K562 (cell line): ENCODE measurements at regions of chrX and their contacts with region 1.

Region 1: GRCh38 chrX:37825209-37825842 is 22.0 kb downstream of the DYNLT3 start:
- DNase-seq: peak; percentile 19 to 51 (median 24)
- ATAC-seq: peak; percentile 77
- H3K4me3 ChIP-seq: no peak overlapping the region
- H3K27ac ChIP-seq: no peak overlapping the region
- H3K4me1 ChIP-seq: no peaks in the 10 kb centered on the region; a peak in 1 of 5 replicates
- H3K27me3 ChIP-seq: no peaks in the 10 kb centered on the region
- CTCF ChIP-seq: peak; percentile 69 to 87 (median 76); a peak in 5 of 6 replicates
- EP300 ChIP-seq: no peak
- POLR2A ChIP-seq: no peak
- RAD21 ChIP-seq: peak; percentile 93 to 95

Region 2: GRCh38 chrX:37509349-37509748 is 316.0 kb before region 1 on chrX:
- CTCF ChIA-PET with region 1: no interaction called
- POLR2A ChIA-PET with region 1: no interaction called
- in situ Hi-C with region 1: no loop called
- intact Hi-C with region 1: loop called (anchors 1 kb)
- DNase-seq: peak in 1 of 4 experiments; percentile 8
- ATAC-seq: peak; percentile 77
- H3K4me3 ChIP-seq: no peak overlapping the region
- H3K27ac ChIP-seq: no peak overlapping the region
- H3K4me1 ChIP-seq: peaks cover 0 to 3% of the 10 kb centered on the region in 2 experiments; a peak in 1 of 5 replicates
- H3K27me3 ChIP-seq: no peaks in the 10 kb centered on the region
- CTCF ChIP-seq: peak; percentile 15 to 42 (median 40); a peak in 3 of 6 replicates
- EP300 ChIP-seq: no peak
- POLR2A ChIP-seq: no peak
- RAD21 ChIP-seq: peak; percentile 33 to 60

Region 3: DNA sequence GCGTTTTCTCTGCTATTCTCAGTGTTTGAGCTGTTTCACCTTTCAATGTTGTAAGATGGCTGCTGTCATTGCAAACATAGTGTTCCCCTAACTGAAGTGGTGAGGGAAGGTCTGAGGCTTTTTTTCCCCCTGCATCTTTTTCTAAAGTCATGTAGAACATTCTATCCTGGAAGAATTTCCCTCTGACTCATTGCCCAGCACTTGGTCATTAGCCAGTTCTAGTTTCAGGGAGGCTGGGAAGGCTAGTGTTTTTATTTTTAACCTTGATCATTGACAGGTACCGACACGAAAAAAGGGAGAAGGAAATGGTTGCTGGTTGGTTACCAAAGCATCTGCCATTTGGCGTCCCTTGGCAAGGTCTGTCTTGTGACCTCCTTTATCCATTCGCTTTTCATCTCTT is 247.3 kb before region 1 on chrX:
- CTCF ChIA-PET with region 1: no interaction called
- POLR2A ChIA-PET with region 1: no interaction called
- in situ Hi-C with region 1: loop called (anchors 10 kb)
- intact Hi-C with region 1: loop called (anchors 2 kb)
- DNase-seq: no peak
- ATAC-seq: no peak
- H3K4me3 ChIP-seq: no peak overlapping the region
- H3K27ac ChIP-seq: no peak overlapping the region
- H3K4me1 ChIP-seq: no peaks in the 10 kb centered on the region; a peak in 2 of 5 replicates
- H3K27me3 ChIP-seq: no peaks in the 10 kb centered on the region
- CTCF ChIP-seq: no peak
- EP300 ChIP-seq: no peak
- POLR2A ChIP-seq: no peak
- RAD21 ChIP-seq: no peak

Region 4: GRCh38 chrX:37627602-37628001 is 197.7 kb before region 1 on chrX:
- CTCF ChIA-PET with region 1: no interaction called
- POLR2A ChIA-PET with region 1: interaction called, 3 read pairs
- in situ Hi-C with region 1: no loop called
- intact Hi-C with region 1: loop called (anchors 5 kb)
- DNase-seq: no peak
- ATAC-seq: no peak
- H3K4me3 ChIP-seq: no peak overlapping the region
- H3K27ac ChIP-seq: no peak overlapping the region
- H3K4me1 ChIP-seq: no peaks in the 10 kb centered on the region
- H3K27me3 ChIP-seq: no peaks in the 10 kb centered on the region
- CTCF ChIP-seq: no peak
- EP300 ChIP-seq: no peak
- POLR2A ChIP-seq: no peak
- RAD21 ChIP-seq: no peak

Region 5: GRCh38 chrX:37745354-37745753 is 80.0 kb before region 1 on chrX:
- CTCF ChIA-PET with region 1: interaction called, 21 read pairs
- POLR2A ChIA-PET with region 1: no interaction called
- in situ Hi-C with region 1: loop called (anchors 5 kb)
- intact Hi-C with region 1: loop called (anchors 1 kb)
- DNase-seq: peak; percentile 54 to 72 (median 68)
- ATAC-seq: peak; percentile 95
- H3K4me3 ChIP-seq: no peak overlapping the region
- H3K27ac ChIP-seq: no peak overlapping the region
- H3K4me1 ChIP-seq: no peaks in the 10 kb centered on the region
- H3K27me3 ChIP-seq: no peaks in the 10 kb centered on the region
- CTCF ChIP-seq: peak; percentile 76 to 80 (median 80)
- EP300 ChIP-seq: no peak
- POLR2A ChIP-seq: no peak
- RAD21 ChIP-seq: peak; percentile 85 to 89

Region 6: GRCh38 chrX:37926700-37927099 is 101.4 kb after region 1 on chrX:
- CTCF ChIA-PET with region 1: no interaction called
- POLR2A ChIA-PET with region 1: no interaction called
- in situ Hi-C with region 1: no loop called
- intact Hi-C with region 1: no loop called
- DNase-seq: peak; percentile 12 to 26 (median 16)
- ATAC-seq: peak; percentile 59; the same call in 1 of the 3 replicates
- H3K4me3 ChIP-seq: no peak overlapping the region
- H3K27ac ChIP-seq: no peak overlapping the region
- H3K4me1 ChIP-seq: no peaks in the 10 kb centered on the region
- H3K27me3 ChIP-seq: no peaks in the 10 kb centered on the region
- CTCF ChIP-seq: peak in 2 of 3 experiments; percentile 13 to 54; a peak in 2 of 6 replicates
- EP300 ChIP-seq: no peak
- POLR2A ChIP-seq: no peak
- RAD21 ChIP-seq: peak; percentile 45 to 67

Region 7: DNA sequence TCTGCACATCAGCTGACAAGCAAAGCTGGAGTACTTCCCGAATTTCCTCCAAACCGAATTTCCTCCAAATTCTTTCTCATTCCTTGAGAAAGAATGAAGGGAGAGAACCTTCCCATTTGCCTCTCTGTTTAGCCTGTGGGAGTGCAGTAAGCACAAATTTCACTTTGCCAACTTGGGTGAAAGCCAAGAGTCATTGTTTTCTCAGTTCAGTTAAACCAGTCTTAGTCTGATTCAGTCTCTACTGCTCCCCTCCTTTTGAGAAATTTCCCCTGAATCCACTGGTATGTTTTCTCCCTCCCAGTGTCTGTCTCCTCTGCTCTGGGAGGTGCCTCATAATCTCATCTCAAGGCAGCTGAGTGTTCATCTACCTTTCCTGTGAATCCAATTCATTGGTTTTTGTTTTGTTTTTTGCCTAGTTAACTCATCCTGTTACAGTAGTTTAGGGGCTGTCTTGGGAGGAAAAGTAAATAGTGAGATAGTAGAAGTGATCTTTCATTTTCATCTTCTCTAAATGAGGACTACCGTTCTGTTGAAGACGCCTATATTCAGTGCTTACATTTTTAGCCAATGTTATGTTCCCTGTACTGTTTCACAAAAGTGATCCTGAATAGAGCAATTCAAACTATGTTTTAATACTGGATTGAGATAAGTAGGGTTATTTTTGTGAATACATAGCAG is 230.0 kb after region 1 on chrX:
- CTCF ChIA-PET with region 1: no interaction called
- POLR2A ChIA-PET with region 1: no interaction called
- in situ Hi-C with region 1: no loop called
- intact Hi-C with region 1: no loop called
- DNase-seq: no peak
- ATAC-seq: no peak
- H3K4me3 ChIP-seq: no peak overlapping the region
- H3K27ac ChIP-seq: no peak overlapping the region
- H3K4me1 ChIP-seq: no peaks in the 10 kb centered on the region
- H3K27me3 ChIP-seq: no peaks in the 10 kb centered on the region
- CTCF ChIP-seq: no peak
- EP300 ChIP-seq: no peak
- POLR2A ChIP-seq: no peak
- RAD21 ChIP-seq: no peak

Region 8: DNA sequence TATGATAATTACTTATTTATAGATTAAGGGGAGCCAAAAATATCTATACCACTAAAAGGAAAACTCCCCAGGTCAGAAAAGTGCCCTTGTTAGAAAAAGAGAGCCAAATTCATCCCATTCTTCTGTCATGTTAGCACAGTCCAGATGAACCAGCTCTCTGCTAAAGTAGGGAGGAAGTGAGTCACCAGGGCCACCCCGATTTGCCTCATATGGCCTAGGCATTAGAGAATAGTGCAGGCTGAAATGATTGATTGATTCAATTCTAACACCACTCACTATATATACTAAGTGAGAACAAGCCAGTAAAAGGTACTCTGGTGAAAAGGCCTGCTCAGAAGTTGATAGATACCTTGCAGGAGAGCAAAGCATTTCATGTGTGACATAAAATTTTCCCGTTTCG is 300.9 kb after region 1 on chrX:
- CTCF ChIA-PET with region 1: no interaction called
- POLR2A ChIA-PET with region 1: no interaction called
- in situ Hi-C with region 1: no loop called
- intact Hi-C with region 1: no loop called
- DNase-seq: no peak
- ATAC-seq: no peak
- H3K4me3 ChIP-seq: no peak overlapping the region
- H3K27ac ChIP-seq: no peak overlapping the region
- H3K4me1 ChIP-seq: no peaks in the 10 kb centered on the region
- H3K27me3 ChIP-seq: no peaks in the 10 kb centered on the region
- CTCF ChIP-seq: no peak
- EP300 ChIP-seq: no peak
- POLR2A ChIP-seq: no peak
- RAD21 ChIP-seq: no peak

Region 9: GRCh38 chrX:38175140-38175539 is 349.8 kb after region 1 on chrX:
- CTCF ChIA-PET with region 1: interaction called, 3 read pairs
- POLR2A ChIA-PET with region 1: no interaction called
- in situ Hi-C with region 1: no loop called
- intact Hi-C with region 1: loop called (anchors 10 kb)
- DNase-seq: peak; percentile 28 to 51 (median 36)
- ATAC-seq: peak; percentile 87
- H3K4me3 ChIP-seq: no peak overlapping the region
- H3K27ac ChIP-seq: no peak overlapping the region
- H3K4me1 ChIP-seq: no peaks in the 10 kb centered on the region
- H3K27me3 ChIP-seq: no peaks in the 10 kb centered on the region; a peak in 2 of 5 replicates
- CTCF ChIP-seq: peak; percentile 60 to 77 (median 68)
- EP300 ChIP-seq: no peak
- POLR2A ChIP-seq: no peak
- RAD21 ChIP-seq: peak; percentile 70 to 81